ENCODE measurements at regions of chr19 and their contacts with region 1.

Region 1: DNA sequence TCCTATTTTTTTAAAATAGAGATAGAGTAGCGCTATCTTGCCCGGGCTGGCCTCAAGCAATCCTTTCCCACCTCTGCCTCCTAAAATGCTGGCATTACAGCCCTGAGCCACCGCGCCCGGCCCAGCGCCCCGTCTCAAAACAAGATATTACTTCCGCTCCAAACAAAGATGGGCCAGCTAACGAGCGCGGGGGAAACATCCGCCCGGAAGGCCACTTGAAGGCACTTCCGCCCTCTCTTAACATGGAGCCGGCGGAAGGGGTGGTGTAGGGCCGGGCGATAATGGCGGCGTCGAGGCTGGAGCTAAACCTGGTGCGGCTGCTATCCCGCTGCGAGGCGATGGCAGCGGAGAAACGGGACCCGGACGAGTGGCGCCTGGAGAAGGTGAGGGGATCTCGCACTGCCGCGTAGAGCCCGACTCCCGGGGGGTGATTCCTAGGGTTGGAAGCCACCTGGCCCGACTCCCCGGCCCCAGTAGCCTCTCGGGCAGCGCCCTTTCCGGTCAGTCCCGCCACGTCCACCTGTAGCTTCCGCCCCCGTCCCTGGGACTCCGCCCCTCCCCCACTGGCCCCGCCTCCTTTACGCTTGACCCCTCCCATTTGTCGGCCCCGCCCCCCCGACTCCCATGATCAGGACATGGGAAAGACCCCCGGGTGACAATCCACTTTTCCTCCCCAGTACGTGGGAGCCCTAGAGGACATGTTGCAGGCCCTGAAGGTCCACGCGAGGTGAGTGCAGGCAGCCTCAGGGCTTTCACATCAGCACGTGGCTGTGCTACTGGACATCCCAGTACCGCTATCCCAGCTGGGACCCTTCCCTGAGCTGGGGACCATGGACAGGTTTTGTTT is at the start of gene USE1:
- DNase-seq: peak; percentile 91 to 95 (median 93)
- ATAC-seq: peak; percentile 95 to 97 (median 95)
- H3K4me3 ChIP-seq: peak within 1 kb of the TSS; percentile 38 to 83 (median 78)
- H3K27ac ChIP-seq: peak within 1 kb of the TSS; percentile 90 to 97 (median 94)
- H3K4me1 ChIP-seq: peaks cover 0 to 26% (median 11%) of the 10 kb centered on the region in 12 donors
- H3K27me3 ChIP-seq: no peaks in the 10 kb centered on the region
- CTCF ChIP-seq: no peak
- POLR2A ChIP-seq: peak in 1 of 2 donors; percentile 55
- total RNA-seq, gene USE1: 22.5 to 34.4 (median 25.8) TPM

Region 2: GRCh38 chr19:17260842-17261325 is 45.5 kb after region 1 on chr19:
- intact Hi-C with region 1: loop called in 3 of 10 experiments (anchors 2 to 5 kb)
- DNase-seq: peak; percentile 73 to 90 (median 83)
- ATAC-seq: peak; percentile 65 to 87 (median 84)
- H3K4me3 ChIP-seq: peak overlapping the region in 2 of 12 donors; percentile 9 to 17
- H3K27ac ChIP-seq: no peak overlapping the region
- H3K4me1 ChIP-seq: peaks cover 0 to 9% (median 5%) of the 10 kb centered on the region in 12 donors
- H3K27me3 ChIP-seq: no peaks in the 10 kb centered on the region
- CTCF ChIP-seq: peak; percentile 78 to 92 (median 88)
- POLR2A ChIP-seq: no peak

Region 3: DNA sequence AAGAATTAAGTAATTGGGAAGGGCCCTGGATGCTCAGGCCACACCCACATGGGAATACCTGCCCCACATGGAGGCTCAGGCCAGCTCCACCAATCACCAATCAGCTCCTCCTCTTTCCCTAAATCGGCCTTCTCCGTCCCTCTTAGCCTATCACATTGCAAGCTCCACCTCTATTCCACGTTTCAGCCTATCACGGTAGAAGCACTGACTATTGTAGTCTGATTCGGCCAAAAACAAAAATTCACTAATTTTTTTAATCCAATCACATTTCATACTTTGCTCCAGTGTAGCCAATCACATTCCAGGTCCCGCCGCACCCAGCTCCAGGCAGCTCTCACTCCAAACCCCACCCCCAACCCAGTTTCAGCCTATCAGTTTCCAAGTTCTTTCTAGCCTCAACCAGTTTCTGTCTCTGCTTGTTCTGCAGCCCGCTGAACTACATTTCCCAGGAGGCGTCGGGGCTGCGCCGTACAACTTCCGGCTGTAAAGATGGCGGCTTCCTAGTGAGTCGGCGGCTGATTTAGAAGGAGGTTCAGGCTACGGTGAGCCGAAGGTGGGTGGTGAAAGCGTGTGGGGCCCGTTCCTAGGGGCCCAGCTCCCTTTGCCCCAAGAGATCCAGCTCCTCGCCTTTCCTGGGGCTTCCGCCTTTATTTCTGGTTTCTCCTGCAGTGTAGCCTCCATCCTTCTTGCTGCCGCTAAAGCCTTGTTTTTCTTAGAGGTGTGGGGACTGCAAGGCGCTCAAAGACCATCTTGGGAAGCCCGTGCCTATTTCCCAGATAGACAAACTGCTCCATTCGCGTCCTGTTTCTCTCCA is 51.8 kb after region 1 on chr19 and contains the start of gene BABAM1:
- intact Hi-C with region 1: loop called in 3 of 10 experiments (anchors 2 to 5 kb)
- DNase-seq: peak; percentile 94 to 98 (median 97)
- ATAC-seq: peak; percentile 96 to 98 (median 97)
- H3K4me3 ChIP-seq: peak within 1 kb of the TSS; percentile 58 to 96 (median 80)
- H3K27ac ChIP-seq: peak within 1 kb of the TSS in 11 of 12 donors; percentile 62 to 96 (median 76)
- H3K4me1 ChIP-seq: peaks cover 0 to 23% (median 15%) of the 10 kb centered on the region in 12 donors
- H3K27me3 ChIP-seq: no peaks in the 10 kb centered on the region
- CTCF ChIP-seq: no peak
- POLR2A ChIP-seq: peak in 1 of 2 donors; percentile 46
- total RNA-seq, gene BABAM1: 60.9 to 92.4 (median 75.9) TPM

Region 4: GRCh38 chr19:17419621-17420466 is 204.5 kb after region 1 on chr19 and contains the start of gene MVB12A:
- intact Hi-C with region 1: no loop called
- DNase-seq: peak; percentile 98 to 99 (median 98)
- ATAC-seq: peak; percentile 95 to 99 (median 98)
- H3K4me3 ChIP-seq: peak within 1 kb of the TSS; percentile 46 to 98 (median 88)
- H3K27ac ChIP-seq: peak within 1 kb of the TSS in 11 of 12 donors; percentile 61 to 90 (median 83)
- H3K4me1 ChIP-seq: peaks cover 0 to 20% (median 9%) of the 10 kb centered on the region in 12 donors
- H3K27me3 ChIP-seq: no peaks in the 10 kb centered on the region
- CTCF ChIP-seq: no peak
- POLR2A ChIP-seq: peak in 1 of 2 donors; percentile 60
- total RNA-seq, gene MVB12A: 11.8 to 41.5 (median 18.5) TPM